CD4-positive, alpha-beta T cell (primary cell): ENCODE measurements at regions of chr17 and their contacts with region 1.

Region 1: DNA sequence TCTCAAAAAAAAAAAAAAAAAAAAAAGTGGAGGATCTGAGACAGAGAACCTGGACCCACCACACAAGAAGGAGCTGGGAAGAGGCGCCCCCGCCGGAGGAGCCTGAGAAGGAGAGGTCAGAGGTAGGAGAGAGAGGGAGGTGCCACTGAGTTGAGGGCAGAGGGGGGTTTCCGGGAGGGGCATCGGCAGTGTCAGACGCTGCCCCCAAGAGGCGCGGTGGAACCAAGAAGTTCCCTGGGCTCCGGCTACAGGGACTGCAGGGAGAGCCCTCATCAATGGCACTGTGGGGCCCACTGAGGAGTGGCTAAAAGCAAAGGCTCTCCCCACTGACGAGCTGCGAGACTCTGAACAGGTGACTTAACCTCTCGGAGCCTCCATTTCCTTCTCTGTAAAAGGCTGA is 4.2 kb downstream of the CCDC42 start:
- DNase-seq: peak in 13 of 14 experiments; percentile 11 to 79 (median 52)
- ATAC-seq: peak; percentile 65
- H3K4me3 ChIP-seq: peak overlapping the region; percentile 55
- H3K4me3 Mint-ChIP-seq: peak overlapping the region; percentile 86
- H3K27ac ChIP-seq: peak overlapping the region in 1 of 2 donors; percentile 52
- H3K27ac Mint-ChIP-seq: peak overlapping the region; percentile 47
- H3K4me1 ChIP-seq: peaks cover 22% of the 10 kb centered on the region
- H3K4me1 Mint-ChIP-seq: no peaks in the 10 kb centered on the region
- H3K27me3 ChIP-seq: no peaks in the 10 kb centered on the region
- H3K27me3 Mint-ChIP-seq: peaks cover 10% of the 10 kb centered on the region
- CTCF ChIP-seq: no peak

Region 2: DNA sequence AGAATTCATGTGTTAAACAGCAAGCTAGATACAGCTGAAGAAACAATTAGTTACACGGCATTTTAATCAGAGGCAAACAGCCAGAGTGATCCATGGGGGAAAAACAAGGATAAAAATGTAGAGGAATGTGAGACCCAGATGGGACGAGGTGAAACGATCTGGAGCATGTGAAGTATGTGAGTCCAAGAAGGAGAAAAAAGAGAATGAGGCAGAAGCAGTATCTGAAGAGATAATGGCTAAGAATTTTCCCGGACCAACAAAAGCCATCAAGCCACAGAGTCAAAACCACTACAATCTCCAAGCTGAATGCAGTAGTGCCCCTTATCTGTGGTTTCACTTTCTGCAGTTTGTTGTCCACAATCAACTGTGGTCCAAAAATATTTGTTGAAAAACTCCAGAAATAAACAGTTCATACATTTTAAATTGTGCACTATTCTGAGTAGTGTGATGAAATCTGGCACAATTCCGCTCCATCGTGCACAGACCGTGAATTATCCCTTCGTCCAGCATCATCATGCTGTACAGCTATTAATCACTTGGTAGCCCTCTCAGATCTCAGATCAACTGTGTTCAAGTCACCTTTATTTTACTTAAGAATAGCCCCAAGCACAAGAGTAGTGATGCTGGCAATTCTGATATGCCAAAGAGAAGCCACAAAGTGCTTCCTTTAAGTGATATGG is 128.7 kb before region 1 on chr17:
- CTCF ChIA-PET with region 1: no interaction called
- POLR2A ChIA-PET with region 1: no interaction called
- intact Hi-C with region 1: no loop called
- DNase-seq: no peak
- ATAC-seq: no peak
- H3K4me3 ChIP-seq: no peak overlapping the region
- H3K4me3 Mint-ChIP-seq: no peak overlapping the region
- H3K27ac ChIP-seq: no peak overlapping the region
- H3K27ac Mint-ChIP-seq: no peak overlapping the region
- H3K4me1 ChIP-seq: no peaks in the 10 kb centered on the region
- H3K4me1 Mint-ChIP-seq: no peaks in the 10 kb centered on the region
- H3K27me3 ChIP-seq: no peaks in the 10 kb centered on the region
- H3K27me3 Mint-ChIP-seq: peaks cover 14% of the 10 kb centered on the region
- CTCF ChIP-seq: no peak

Region 3: GRCh38 chr17:8630802-8631553 is 109.5 kb before region 1 on chr17:
- CTCF ChIA-PET with region 1: no interaction called
- POLR2A ChIA-PET with region 1: no interaction called
- intact Hi-C with region 1: loop called in 1 of 2 experiments (anchors 5 kb)
- DNase-seq: peak; percentile 66 to 92 (median 80)
- ATAC-seq: peak; percentile 86
- H3K4me3 ChIP-seq: peak overlapping the region; percentile 86
- H3K4me3 Mint-ChIP-seq: peak overlapping the region; percentile 100
- H3K27ac ChIP-seq: no peak overlapping the region
- H3K27ac Mint-ChIP-seq: no peak overlapping the region
- H3K4me1 ChIP-seq: peaks cover 18% of the 10 kb centered on the region
- H3K4me1 Mint-ChIP-seq: peaks cover 23% of the 10 kb centered on the region
- H3K27me3 ChIP-seq: peaks cover 6 to 31% of the 10 kb centered on the region in 2 experiments
- H3K27me3 Mint-ChIP-seq: peaks cover 47% of the 10 kb centered on the region
- CTCF ChIP-seq: no peak